SK-N-SH (cell line): ENCODE measurements at regions of chr20 and their contacts with region 1.

Region 1: GRCh38 chr20:35954200-35954906 is at the start of gene SCAND1:
- DNase-seq: peak; percentile 95
- H3K4me3 ChIP-seq: peak within 1 kb of the TSS; percentile 88
- H3K27ac ChIP-seq: peak within 1 kb of the TSS; percentile 93 to 96
- H3K4me1 ChIP-seq: peaks cover 11 to 14% of the 10 kb centered on the region in 2 experiments; a peak in 2 of 4 replicates
- H3K27me3 ChIP-seq: no peaks in the 10 kb centered on the region
- CTCF ChIP-seq: peak; percentile 93
- EP300 ChIP-seq: peak in 1 of 2 experiments; percentile 51; a peak in 1 of 4 replicates
- RAD21 ChIP-seq: peak; percentile 52
- polyA plus RNA-seq, gene SCAND1: 26.4 and 44.1 TPM in 2 replicates

Region 2: GRCh38 chr20:35741892-35742740 is 212.2 kb before region 1 on chr20 and contains the start of gene RBM39:
- CTCF ChIA-PET with region 1: interaction called, 3 read pairs
- POLR2A ChIA-PET with region 1: interaction called, 34 read pairs
- DNase-seq: peak; percentile 90
- H3K4me3 ChIP-seq: peak within 1 kb of the TSS; percentile 79 to 82
- H3K27ac ChIP-seq: peak within 1 kb of the TSS; percentile 97 to 99
- H3K4me1 ChIP-seq: peaks cover 12% of the 10 kb centered on the region in 2 experiments; a peak in 3 of 4 replicates
- H3K27me3 ChIP-seq: no peaks in the 10 kb centered on the region
- CTCF ChIP-seq: peak; percentile 41
- EP300 ChIP-seq: peak in 1 of 2 experiments; percentile 34; a peak in 1 of 4 replicates
- RAD21 ChIP-seq: 0 out of 2 replicates have a peak, but pooled peaks have one; percentile 8
- polyA plus RNA-seq, gene RBM39: 68.4 and 98.4 TPM in 2 replicates

Region 3: DNA sequence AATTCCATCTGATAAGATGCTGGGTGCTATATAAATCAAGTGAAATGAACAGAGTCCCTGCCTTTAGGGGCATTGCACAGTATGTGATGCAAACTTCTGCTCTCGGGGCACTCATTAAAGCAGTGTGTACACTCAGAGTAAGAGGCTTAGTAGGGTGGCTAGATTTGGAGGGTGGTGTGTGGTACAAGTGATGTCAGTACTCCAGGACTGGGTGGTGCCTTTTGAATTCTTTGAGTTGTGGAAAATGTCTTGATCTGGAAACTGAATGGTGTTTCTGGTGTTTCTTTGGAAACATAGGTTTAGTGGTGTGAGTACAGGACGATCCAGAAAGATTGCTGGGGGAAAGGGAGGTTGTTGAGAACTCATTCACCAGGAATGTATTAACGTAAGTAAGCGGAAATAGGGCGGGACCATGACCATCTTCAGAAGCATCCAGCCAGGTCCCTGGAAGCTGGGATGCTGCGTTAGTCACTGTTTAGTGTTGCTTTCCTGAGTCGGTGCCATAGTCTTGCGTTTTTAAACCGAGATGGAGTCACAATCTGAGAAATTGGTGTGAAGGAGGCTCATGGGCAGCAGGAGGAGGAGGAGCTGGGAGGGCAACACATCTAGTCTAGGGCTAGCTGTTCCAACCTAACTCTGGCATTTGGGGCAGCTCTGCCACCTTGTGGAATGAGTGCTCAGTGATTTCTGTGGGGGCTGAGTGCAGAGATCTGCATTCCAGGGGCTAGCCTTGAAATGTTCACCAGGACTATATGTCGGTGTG is 70.4 kb before region 1 on chr20:
- CTCF ChIA-PET with region 1: interaction called, 28 read pairs
- POLR2A ChIA-PET with region 1: interaction called, 5 read pairs
- DNase-seq: peak; percentile 61
- H3K4me3 ChIP-seq: peak overlapping the region; percentile 30 to 50
- H3K27ac ChIP-seq: peak overlapping the region; percentile 79 to 100
- H3K4me1 ChIP-seq: peaks cover 19 to 25% of the 10 kb centered on the region in 2 experiments
- H3K27me3 ChIP-seq: no peaks in the 10 kb centered on the region
- CTCF ChIP-seq: peak; percentile 85
- EP300 ChIP-seq: peak; percentile 37 to 83; a peak in 3 of 4 replicates
- RAD21 ChIP-seq: peak; percentile 92

Region 4: DNA sequence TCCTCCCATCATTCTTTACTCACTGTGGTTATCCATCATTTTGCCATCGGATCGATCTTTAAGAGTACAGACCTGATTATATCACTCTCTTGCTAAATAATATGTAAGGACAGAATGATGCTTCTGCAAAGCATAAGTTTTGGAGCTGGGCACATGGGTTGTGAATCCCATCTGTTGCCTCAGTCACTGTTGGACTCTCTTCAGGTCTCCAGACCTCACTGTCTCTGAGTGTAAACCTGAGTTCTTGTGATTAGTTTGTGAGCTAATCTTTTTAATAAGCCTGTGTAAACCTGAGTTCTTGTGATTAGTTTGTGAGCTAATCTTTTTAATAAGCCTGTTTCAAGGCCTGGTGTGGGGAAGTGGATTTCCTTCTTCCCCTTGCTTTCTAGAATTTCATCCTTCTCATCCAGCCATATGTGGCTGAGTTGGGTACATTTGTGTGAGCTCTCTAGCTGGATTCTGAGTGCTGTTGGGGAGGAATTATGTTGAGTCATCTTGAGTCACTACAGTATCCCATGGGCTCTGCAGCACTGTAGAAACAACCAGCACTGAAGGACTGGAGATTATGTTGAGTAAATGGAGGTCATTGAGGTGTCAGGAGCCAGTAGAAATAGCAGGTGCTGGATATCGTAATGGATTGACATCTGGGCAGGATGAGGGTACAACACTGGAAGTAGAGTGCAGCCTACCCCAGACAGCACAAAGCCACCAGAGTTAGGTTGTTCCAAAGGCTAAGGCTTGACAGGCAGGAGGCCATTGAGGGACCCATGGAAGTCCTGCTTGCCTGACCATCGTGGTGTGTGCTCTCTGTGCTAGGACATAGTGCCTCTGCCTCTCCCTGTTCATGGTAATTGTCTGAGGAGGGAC is 52.4 kb before region 1 on chr20:
- CTCF ChIA-PET with region 1: no interaction called
- POLR2A ChIA-PET with region 1: no interaction called
- DNase-seq: no peak
- H3K4me3 ChIP-seq: no peak overlapping the region
- H3K27ac ChIP-seq: peak overlapping the region; percentile 40 to 94; a peak in 3 of 4 replicates
- H3K4me1 ChIP-seq: peaks cover 11 to 14% of the 10 kb centered on the region in 2 experiments; a peak in 3 of 4 replicates
- H3K27me3 ChIP-seq: no peaks in the 10 kb centered on the region
- CTCF ChIP-seq: no peak
- EP300 ChIP-seq: no peak
- RAD21 ChIP-seq: no peak

Region 5: GRCh38 chr20:35942243-35942642 is 12.1 kb before region 1 on chr20:
- CTCF ChIA-PET with region 1: interaction called, 29 read pairs
- POLR2A ChIA-PET with region 1: interaction called, 4 read pairs
- DNase-seq: no peak
- H3K4me3 ChIP-seq: no peak overlapping the region
- H3K27ac ChIP-seq: no peak overlapping the region
- H3K4me1 ChIP-seq: peaks cover 2 to 5% of the 10 kb centered on the region in 2 experiments; a peak in 2 of 4 replicates
- H3K27me3 ChIP-seq: no peaks in the 10 kb centered on the region
- CTCF ChIP-seq: no peak
- EP300 ChIP-seq: no peak
- RAD21 ChIP-seq: no peak

Region 6: GRCh38 chr20:35972462-35972861 is 18.1 kb after region 1 on chr20:
- CTCF ChIA-PET with region 1: interaction called, 26 read pairs
- POLR2A ChIA-PET with region 1: interaction called, 3 read pairs
- DNase-seq: peak; percentile 81
- H3K4me3 ChIP-seq: no peak overlapping the region
- H3K27ac ChIP-seq: peak overlapping the region in 1 of 2 experiments; percentile 75; a peak in 2 of 4 replicates
- H3K4me1 ChIP-seq: peaks cover 0 to 2% of the 10 kb centered on the region in 2 experiments; a peak in 1 of 4 replicates
- H3K27me3 ChIP-seq: no peaks in the 10 kb centered on the region; the same call in 1 of the 2 replicates
- CTCF ChIP-seq: no peak
- EP300 ChIP-seq: 0 out of 4 replicates have a peak, but pooled peaks of 1 of the 2 experiments have one; percentile 34
- RAD21 ChIP-seq: no peak

Region 7: GRCh38 chr20:35981969-35982368 is 27.6 kb after region 1 on chr20:
- CTCF ChIA-PET with region 1: interaction called, 10 read pairs
- POLR2A ChIA-PET with region 1: no interaction called
- DNase-seq: no peak
- H3K4me3 ChIP-seq: no peak overlapping the region
- H3K27ac ChIP-seq: no peak overlapping the region
- H3K4me1 ChIP-seq: no peaks in the 10 kb centered on the region
- H3K27me3 ChIP-seq: no peaks in the 10 kb centered on the region
- CTCF ChIP-seq: no peak
- EP300 ChIP-seq: no peak
- RAD21 ChIP-seq: no peak

Region 8: GRCh38 chr20:36117638-36118037 is 163.3 kb after region 1 on chr20:
- CTCF ChIA-PET with region 1: no interaction called
- POLR2A ChIA-PET with region 1: no interaction called
- DNase-seq: no peak
- H3K4me3 ChIP-seq: no peak overlapping the region
- H3K27ac ChIP-seq: 0 out of 4 replicates have a peak overlapping the region, but pooled peaks of 1 of the 2 experiments have one; percentile 11
- H3K4me1 ChIP-seq: no peaks in the 10 kb centered on the region
- H3K27me3 ChIP-seq: no peaks in the 10 kb centered on the region
- CTCF ChIP-seq: no peak
- EP300 ChIP-seq: no peak
- RAD21 ChIP-seq: no peak

Region 9: DNA sequence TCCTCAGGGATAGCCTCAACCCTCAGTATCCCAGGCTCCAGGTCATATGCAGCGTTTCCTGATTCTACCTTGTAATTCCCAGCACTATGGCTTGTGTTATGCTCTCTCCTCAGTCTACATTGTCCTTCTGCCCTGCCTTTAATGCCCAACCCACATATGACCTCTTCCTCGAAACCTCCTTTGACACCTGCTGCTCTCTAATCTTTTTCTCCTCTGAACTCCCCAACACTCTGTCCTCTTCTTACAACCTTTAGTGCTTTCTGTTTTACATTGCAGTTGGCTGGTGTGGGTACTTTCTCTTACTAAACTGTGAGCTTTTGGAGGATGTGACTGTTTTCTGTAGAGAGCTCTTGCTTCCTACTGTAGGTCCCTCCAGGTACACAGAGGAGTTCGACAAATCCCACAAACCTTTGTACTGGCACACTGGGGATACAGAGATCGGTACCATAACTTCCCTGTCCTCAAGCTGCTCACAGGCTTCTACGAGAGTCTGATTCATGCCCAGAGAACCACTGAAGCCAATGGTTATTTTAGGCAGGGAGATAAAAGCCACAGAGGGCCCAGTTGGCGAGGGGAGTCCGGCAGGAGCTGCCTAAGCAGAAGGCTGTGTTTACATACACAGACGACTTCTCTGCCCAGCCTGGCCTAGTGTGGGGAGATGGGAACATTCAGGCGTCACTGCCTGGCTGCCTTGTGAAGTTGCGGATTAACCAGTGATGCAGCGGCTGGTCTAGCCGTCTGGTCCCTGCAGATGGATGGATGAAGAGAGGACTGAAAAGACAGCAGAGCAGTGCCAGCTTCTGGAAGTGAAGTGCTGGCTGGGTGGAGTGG is 191.7 kb after region 1 on chr20:
- CTCF ChIA-PET with region 1: interaction called, 32 read pairs
- POLR2A ChIA-PET with region 1: no interaction called
- DNase-seq: no peak
- H3K4me3 ChIP-seq: no peak overlapping the region
- H3K27ac ChIP-seq: no peak overlapping the region
- H3K4me1 ChIP-seq: peaks cover 0 to 12% of the 10 kb centered on the region in 2 experiments; a peak in 1 of 4 replicates
- H3K27me3 ChIP-seq: no peaks in the 10 kb centered on the region
- CTCF ChIP-seq: no peak
- EP300 ChIP-seq: no peak
- RAD21 ChIP-seq: no peak

Region 10: DNA sequence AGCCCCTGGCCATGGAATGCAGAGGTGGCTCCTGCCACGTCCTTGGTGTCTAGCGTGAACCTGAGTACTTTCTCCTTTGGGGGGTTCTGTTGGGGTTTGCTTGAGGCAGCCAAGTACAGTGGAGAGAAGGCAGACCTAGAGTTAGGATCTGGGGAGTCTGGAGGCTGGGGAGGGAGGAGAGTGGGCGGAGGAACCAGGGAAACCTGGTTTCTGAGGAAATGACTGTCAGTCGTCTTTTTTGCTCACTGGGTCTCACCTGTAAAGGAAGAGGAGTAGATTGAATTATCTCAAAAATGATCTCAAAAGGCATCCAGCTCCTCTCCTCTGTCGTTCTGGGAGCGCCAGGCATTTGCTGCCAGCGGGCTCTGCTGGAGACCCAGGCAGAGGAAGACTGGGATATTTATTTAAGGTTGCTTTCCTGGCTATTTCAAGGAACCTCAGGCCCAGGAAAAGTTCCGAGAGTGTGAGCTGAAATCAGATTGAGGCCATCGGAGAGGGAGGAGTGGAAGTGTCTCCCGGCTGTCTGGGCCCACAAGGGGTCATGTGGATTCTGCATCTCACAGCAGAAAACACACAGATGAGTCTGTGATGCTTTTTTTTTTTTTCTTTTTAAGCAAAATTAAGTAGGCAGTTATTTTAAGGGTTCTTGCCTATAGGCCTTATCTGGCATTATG is 216.3 kb after region 1 on chr20:
- CTCF ChIA-PET with region 1: no interaction called
- POLR2A ChIA-PET with region 1: no interaction called
- DNase-seq: no peak
- H3K4me3 ChIP-seq: no peak overlapping the region
- H3K27ac ChIP-seq: no peak overlapping the region
- H3K4me1 ChIP-seq: peaks cover 8 to 23% of the 10 kb centered on the region in 2 experiments; a peak in 3 of 4 replicates
- H3K27me3 ChIP-seq: no peaks in the 10 kb centered on the region
- CTCF ChIP-seq: no peak
- EP300 ChIP-seq: no peak
- RAD21 ChIP-seq: no peak